Right ventricle myocardium superior (tissue), 1 donor: ENCODE measurements at regions of chr2 and their contacts with region 1.

Region 1: GRCh38 chr2:139674577-139674976 is 894.4 kb upstream of the NXPH2 start:
- DNase-seq: no peak
- ATAC-seq: no peak

Region 2: DNA sequence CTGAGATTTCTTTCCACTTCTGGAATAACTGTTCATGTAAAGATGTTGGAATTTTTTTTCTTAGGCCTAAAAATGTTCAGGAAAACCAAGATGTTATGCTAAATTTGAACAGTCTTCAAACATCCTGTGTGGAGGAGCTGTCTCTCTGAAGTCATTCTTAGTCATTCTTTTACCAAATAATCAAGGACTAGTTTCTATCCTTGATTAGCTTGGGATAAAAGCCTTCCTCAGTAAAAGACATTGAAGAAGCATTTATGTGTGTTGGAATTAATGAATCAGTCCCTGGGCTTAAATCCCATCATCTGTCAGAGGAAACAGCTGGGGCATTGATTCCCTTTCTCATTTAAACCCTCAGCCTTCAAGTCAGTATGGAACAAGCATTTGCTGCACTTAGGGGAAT is 594.3 kb before region 1 on chr2:
- intact Hi-C with region 1: no loop called
- DNase-seq: no peak
- ATAC-seq: no peak

Region 3: GRCh38 chr2:139631966-139632365 is 42.6 kb before region 1 on chr2:
- intact Hi-C with region 1: loop called (anchors 2 kb)
- DNase-seq: no peak
- ATAC-seq: no peak

Region 4: DNA sequence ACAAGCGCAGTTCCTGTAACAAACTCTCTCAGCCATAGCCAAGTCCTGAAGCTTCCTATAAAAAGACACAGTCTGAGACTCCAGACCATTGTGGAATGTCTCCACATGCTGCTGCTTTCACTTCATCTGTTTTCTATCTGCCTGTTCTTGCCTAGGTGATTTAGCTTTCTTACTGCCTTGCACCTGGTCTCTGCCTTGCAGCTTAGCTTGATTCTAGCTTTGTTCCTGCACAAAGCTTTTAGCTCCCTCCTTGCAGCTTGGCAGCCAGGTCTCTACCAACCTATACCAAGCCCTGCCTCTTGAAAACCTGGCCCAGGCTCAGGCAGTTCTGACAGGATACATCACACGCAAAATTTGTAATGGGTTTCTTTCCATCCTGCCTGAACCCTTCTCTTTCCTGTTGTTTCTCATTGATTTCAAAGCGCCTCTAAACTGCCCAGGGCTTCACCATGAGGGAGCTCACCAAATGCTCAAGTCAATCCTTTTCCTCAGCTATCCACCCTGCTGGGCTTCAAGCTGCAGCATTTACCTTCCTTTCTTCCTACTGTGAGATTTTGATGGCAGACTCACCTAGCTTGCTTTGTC is 46.9 kb after region 1 on chr2:
- intact Hi-C with region 1: no loop called
- DNase-seq: no peak
- ATAC-seq: no peak